Tibial artery (tissue), 4 donors: ENCODE measurements at regions of chr16 and their contacts with region 1.

Region 1: DNA sequence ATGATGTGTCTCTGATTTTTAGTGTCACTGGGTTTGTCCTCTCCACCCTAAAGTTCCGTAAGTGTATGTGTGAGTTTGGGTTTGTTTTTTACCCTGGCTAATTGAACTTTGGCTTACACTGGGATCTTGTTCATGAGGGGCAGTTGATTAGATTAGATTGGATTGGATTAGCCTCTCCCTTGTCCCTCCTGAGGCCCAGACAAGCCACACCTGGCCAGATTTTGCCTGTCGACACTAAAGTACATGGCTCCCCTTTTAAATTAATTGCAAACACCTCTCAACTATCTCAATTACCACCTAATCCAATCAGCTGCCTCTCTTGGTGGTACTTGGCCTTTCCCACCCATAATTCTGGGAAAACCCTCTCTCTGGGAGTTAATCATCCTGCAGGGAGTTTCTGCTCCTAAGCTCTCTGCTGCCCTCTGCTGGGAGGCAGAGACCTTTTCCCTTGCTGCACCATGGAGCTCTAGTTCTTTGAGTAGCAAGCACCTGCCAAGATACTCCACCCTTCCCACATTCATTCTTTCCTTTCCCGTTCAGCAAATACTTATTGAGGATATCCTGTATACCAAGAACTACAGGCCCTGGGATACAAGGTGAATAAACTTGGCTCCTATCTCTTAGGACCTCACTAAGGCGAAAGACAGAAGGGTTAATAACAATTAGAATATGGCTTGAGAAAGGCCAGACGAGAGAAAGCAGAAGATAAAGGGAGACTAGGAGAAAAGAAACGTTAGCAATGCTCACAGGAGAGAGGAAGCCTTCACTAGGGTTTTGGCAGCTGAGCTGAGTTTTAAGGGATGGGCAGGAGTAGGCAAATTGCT is 60.0 kb upstream of the MPHOSPH6 start:
- DNase-seq: peak in 1 of 2 donors; percentile 68
- H3K4me3 ChIP-seq: no peak overlapping the region
- H3K27ac ChIP-seq: no peak overlapping the region
- H3K4me1 ChIP-seq: no peaks in the 10 kb centered on the region
- H3K27me3 ChIP-seq: peaks cover 0 to 9% of the 10 kb centered on the region in 2 donors
- CTCF ChIP-seq: peak; percentile 55 to 64

Region 2: GRCh38 chr16:81896900-81897299 is 333.1 kb before region 1 on chr16:
- intact Hi-C with region 1: loop called (anchors 10 kb)
- DNase-seq: peak in 1 of 2 donors; percentile 6
- H3K4me3 ChIP-seq: no peak overlapping the region
- H3K27ac ChIP-seq: no peak overlapping the region
- H3K4me1 ChIP-seq: peaks cover 0 to 4% (median 0%) of the 10 kb centered on the region in 4 donors
- H3K27me3 ChIP-seq: peaks cover 0 to 9% of the 10 kb centered on the region in 2 donors
- CTCF ChIP-seq: no peak